CD8-positive, alpha-beta T cell (primary cell): ENCODE measurements at regions of chr5 and their contacts with region 1.

Region 1: GRCh38 chr5:42950440-42951292 is 89.5 kb downstream of the ANXA2R start:
- DNase-seq: peak; percentile 26 to 90 (median 72)
- ATAC-seq: peak; percentile 43
- H3K4me3 ChIP-seq: peak overlapping the region; percentile 72 to 83
- H3K4me3 Mint-ChIP-seq: peak overlapping the region; percentile 94
- H3K27ac ChIP-seq: peak overlapping the region; percentile 93 to 94
- H3K27ac Mint-ChIP-seq: peak overlapping the region; percentile 99
- H3K4me1 ChIP-seq: peaks cover 20% of the 10 kb centered on the region
- H3K4me1 Mint-ChIP-seq: peaks cover 34% of the 10 kb centered on the region
- H3K27me3 ChIP-seq: no peaks in the 10 kb centered on the region
- H3K27me3 Mint-ChIP-seq: no peaks in the 10 kb centered on the region
- CTCF ChIP-seq: no peak

Region 2: GRCh38 chr5:42429694-42430093 is 521.0 kb before region 1 on chr5:
- CTCF ChIA-PET with region 1: no interaction called
- POLR2A ChIA-PET with region 1: no interaction called
- intact Hi-C with region 1: no loop called
- DNase-seq: no peak
- ATAC-seq: no peak
- H3K4me3 ChIP-seq: no peak overlapping the region
- H3K4me3 Mint-ChIP-seq: no peak overlapping the region
- H3K27ac ChIP-seq: no peak overlapping the region
- H3K27ac Mint-ChIP-seq: no peak overlapping the region
- H3K4me1 ChIP-seq: no peaks in the 10 kb centered on the region
- H3K4me1 Mint-ChIP-seq: no peaks in the 10 kb centered on the region
- H3K27me3 ChIP-seq: peaks cover 0 to 6% of the 10 kb centered on the region in 2 experiments
- H3K27me3 Mint-ChIP-seq: peaks cover 19% of the 10 kb centered on the region
- CTCF ChIP-seq: no peak

Region 3: DNA sequence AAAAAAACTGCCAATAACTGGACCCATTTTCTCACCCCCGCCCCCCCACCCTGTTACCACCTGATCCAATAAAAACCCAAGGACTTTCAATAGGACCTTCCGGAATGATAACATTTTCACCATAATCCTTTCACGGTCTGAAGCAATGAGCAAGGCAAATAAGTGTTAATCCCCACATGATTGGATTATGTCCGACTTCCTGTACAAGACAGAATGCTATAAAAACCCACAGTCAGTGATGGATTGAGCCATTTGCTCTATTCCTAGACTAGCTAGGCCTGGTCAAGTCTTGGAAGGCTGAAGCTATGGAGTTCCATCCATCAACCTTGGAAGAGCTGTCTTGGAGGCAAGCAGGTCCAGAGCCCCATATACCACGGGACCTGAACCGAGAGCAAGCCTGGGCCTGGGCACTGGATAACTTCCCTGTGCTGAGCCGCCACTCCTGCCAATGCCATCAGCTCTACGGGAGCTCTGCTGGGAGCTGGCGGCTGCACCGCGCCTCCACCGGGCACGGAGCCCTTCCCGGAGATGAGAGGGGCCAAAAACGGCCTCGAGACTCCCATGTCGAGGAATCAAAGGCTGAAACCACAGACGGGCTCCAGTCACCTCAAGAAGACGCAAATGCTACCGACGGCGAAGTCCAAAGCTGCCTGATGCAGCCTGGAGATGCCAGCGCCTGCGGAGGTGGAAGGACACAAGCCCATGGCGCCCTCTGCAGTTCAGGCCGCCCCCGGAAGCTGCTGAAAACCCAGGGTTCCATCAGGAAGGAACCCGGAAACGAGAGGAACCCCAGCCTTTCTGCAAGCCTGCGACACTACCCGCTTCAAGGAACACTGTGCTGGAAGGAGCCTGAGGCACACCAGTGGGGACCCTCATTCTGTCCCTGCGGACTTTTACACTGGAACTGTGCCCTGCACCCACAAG is 20.2 kb after region 1 on chr5:
- CTCF ChIA-PET with region 1: interaction called, 13 read pairs
- POLR2A ChIA-PET with region 1: interaction called, 5 read pairs
- intact Hi-C with region 1: no loop called
- DNase-seq: peak in 3 of 9 experiments; percentile 21 to 45 (median 33)
- ATAC-seq: no peak
- H3K4me3 ChIP-seq: no peak overlapping the region
- H3K4me3 Mint-ChIP-seq: no peak overlapping the region
- H3K27ac ChIP-seq: no peak overlapping the region
- H3K27ac Mint-ChIP-seq: no peak overlapping the region
- H3K4me1 ChIP-seq: no peaks in the 10 kb centered on the region
- H3K4me1 Mint-ChIP-seq: peaks cover 6% of the 10 kb centered on the region
- H3K27me3 ChIP-seq: no peaks in the 10 kb centered on the region
- H3K27me3 Mint-ChIP-seq: no peaks in the 10 kb centered on the region
- CTCF ChIP-seq: no peak

Region 4: GRCh38 chr5:42994246-42995151 is 43.8 kb after region 1 on chr5:
- CTCF ChIA-PET with region 1: interaction called, 99 read pairs
- POLR2A ChIA-PET with region 1: interaction called, 275 read pairs
- intact Hi-C with region 1: loop called (anchors 1 kb)
- DNase-seq: peak; percentile 75 to 94 (median 88)
- ATAC-seq: peak; percentile 63
- H3K4me3 ChIP-seq: peak overlapping the region; percentile 78 to 92
- H3K4me3 Mint-ChIP-seq: peak overlapping the region; percentile 99
- H3K27ac ChIP-seq: peak overlapping the region; percentile 97
- H3K27ac Mint-ChIP-seq: peak overlapping the region; percentile 100
- H3K4me1 ChIP-seq: peaks cover 23% of the 10 kb centered on the region
- H3K4me1 Mint-ChIP-seq: peaks cover 41% of the 10 kb centered on the region
- H3K27me3 ChIP-seq: no peaks in the 10 kb centered on the region
- H3K27me3 Mint-ChIP-seq: no peaks in the 10 kb centered on the region
- CTCF ChIP-seq: peak; percentile 93

Region 5: GRCh38 chr5:43019614-43020293 is 69.1 kb after region 1 on chr5:
- CTCF ChIA-PET with region 1: interaction called, 22 read pairs
- POLR2A ChIA-PET with region 1: interaction called, 151 read pairs
- intact Hi-C with region 1: loop called (anchors 1 to 2 kb)
- DNase-seq: peak; percentile 69 to 96 (median 84)
- ATAC-seq: peak; percentile 66
- H3K4me3 ChIP-seq: peak overlapping the region; percentile 70 to 73
- H3K4me3 Mint-ChIP-seq: peak overlapping the region; percentile 98
- H3K27ac ChIP-seq: peak overlapping the region; percentile 97 to 98
- H3K27ac Mint-ChIP-seq: peak overlapping the region; percentile 100
- H3K4me1 ChIP-seq: peaks cover 40% of the 10 kb centered on the region
- H3K4me1 Mint-ChIP-seq: peaks cover 43% of the 10 kb centered on the region
- H3K27me3 ChIP-seq: no peaks in the 10 kb centered on the region
- H3K27me3 Mint-ChIP-seq: no peaks in the 10 kb centered on the region
- CTCF ChIP-seq: peak; percentile 71